CD14-positive monocyte (primary cell): ENCODE measurements at regions of chr10 and their contacts with region 1.

Region 1: GRCh38 chr10:931416-932318 is at the start of gene LARP4B:
- DNase-seq: peak; percentile 98 to 99 (median 99)
- H3K4me3 ChIP-seq: peak within 1 kb of the TSS; percentile 87 to 99 (median 90)
- H3K4me3 Mint-ChIP-seq: peak within 1 kb of the TSS; percentile 91 to 98
- H3K27ac ChIP-seq: peak within 1 kb of the TSS; percentile 91 to 97
- H3K27ac Mint-ChIP-seq: peak within 1 kb of the TSS; percentile 95 to 97 (median 96)
- H3K4me1 ChIP-seq: peaks cover 23% of the 10 kb centered on the region in 2 donors
- H3K4me1 Mint-ChIP-seq: peaks cover 32% of the 10 kb centered on the region
- H3K27me3 ChIP-seq: no peaks in the 10 kb centered on the region
- H3K27me3 Mint-ChIP-seq: peaks cover 0 to 3% (median 2%) of the 10 kb centered on the region in 3 donors
- CTCF ChIP-seq: no peak
- polyA plus RNA-seq, gene LARP4B: 17.2 to 52.3 (median 33.0) TPM

Region 2: GRCh38 chr10:665579-666091 is 266.0 kb before region 1 on chr10:
- intact Hi-C with region 1: no loop called
- DNase-seq: no peak
- H3K4me3 ChIP-seq: no peak overlapping the region
- H3K4me3 Mint-ChIP-seq: peak overlapping the region in 1 of 2 donors; percentile 1
- H3K27ac ChIP-seq: no peak overlapping the region
- H3K27ac Mint-ChIP-seq: no peak overlapping the region
- H3K4me1 ChIP-seq: no peaks in the 10 kb centered on the region
- H3K4me1 Mint-ChIP-seq: no peaks in the 10 kb centered on the region
- H3K27me3 ChIP-seq: no peaks in the 10 kb centered on the region
- H3K27me3 Mint-ChIP-seq: peaks cover 6 to 10% (median 9%) of the 10 kb centered on the region in 3 donors
- CTCF ChIP-seq: no peak

Region 3: DNA sequence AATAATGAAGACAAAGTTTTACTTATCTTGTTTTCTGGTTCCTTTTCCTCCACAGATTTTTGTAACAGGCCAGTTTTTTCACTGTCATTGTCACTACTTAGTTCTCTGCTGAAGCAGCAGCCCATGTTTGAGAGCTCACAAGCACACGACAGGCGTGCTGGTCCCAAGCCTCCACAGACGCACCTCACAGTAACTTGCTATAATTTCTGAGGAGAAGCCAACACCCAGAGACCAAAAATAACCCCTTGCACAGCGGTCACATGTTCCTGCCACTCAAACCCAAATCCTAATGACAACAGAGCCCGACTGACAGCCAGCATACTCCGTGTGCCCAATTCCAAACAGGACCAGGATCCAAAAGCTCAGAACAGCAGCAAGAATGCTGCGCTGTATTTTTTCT is 58.6 kb before region 1 on chr10:
- intact Hi-C with region 1: no loop called
- DNase-seq: no peak
- H3K4me3 ChIP-seq: no peak overlapping the region
- H3K4me3 Mint-ChIP-seq: no peak overlapping the region
- H3K27ac ChIP-seq: no peak overlapping the region
- H3K27ac Mint-ChIP-seq: peak overlapping the region in 1 of 7 donors; percentile 4
- H3K4me1 ChIP-seq: no peaks in the 10 kb centered on the region
- H3K4me1 Mint-ChIP-seq: peaks cover 8% of the 10 kb centered on the region
- H3K27me3 ChIP-seq: no peaks in the 10 kb centered on the region
- H3K27me3 Mint-ChIP-seq: peaks cover 0 to 2% (median 0%) of the 10 kb centered on the region in 3 donors
- CTCF ChIP-seq: no peak

Region 4: GRCh38 chr10:944034-944831 is 12.6 kb after region 1 on chr10:
- intact Hi-C with region 1: no loop called
- DNase-seq: peak; percentile 97 to 98 (median 98)
- H3K4me3 ChIP-seq: peak overlapping the region in 1 of 3 experiments; percentile 57
- H3K4me3 Mint-ChIP-seq: peak overlapping the region; percentile 63 to 76
- H3K27ac ChIP-seq: peak overlapping the region; percentile 85 to 93
- H3K27ac Mint-ChIP-seq: peak overlapping the region; percentile 91 to 97 (median 95)
- H3K4me1 ChIP-seq: peaks cover 23 to 24% of the 10 kb centered on the region in 2 donors
- H3K4me1 Mint-ChIP-seq: peaks cover 31% of the 10 kb centered on the region
- H3K27me3 ChIP-seq: no peaks in the 10 kb centered on the region
- H3K27me3 Mint-ChIP-seq: peaks cover 0 to 1% (median 1%) of the 10 kb centered on the region in 3 donors
- CTCF ChIP-seq: no peak

Region 5: DNA sequence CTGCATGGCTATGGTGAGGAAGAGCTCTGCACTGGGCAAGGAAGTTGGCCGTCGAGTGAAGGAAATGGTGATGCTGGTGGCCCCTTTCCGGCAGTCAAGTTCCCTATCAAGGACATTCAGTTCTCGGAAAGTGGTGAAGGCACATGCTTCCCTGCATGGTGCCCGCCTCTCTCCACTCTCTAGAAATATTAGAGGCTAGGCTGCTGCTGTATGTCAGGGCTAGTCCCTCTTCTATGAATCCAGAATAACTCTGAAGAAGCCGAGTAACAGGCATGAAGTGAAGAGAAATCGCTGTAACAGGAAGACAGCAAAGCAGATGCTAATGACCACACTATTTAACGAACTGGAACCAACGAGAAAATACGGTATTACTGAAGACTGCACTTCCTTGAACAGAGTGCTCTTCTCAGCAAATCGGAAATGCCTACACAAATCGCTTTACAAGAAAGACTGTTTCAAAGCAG is 111.9 kb after region 1 on chr10:
- intact Hi-C with region 1: loop called in 1 of 2 experiments (anchors 5 kb)
- DNase-seq: peak; percentile 61 to 65 (median 63)
- H3K4me3 ChIP-seq: peak overlapping the region; percentile 30 to 94 (median 78)
- H3K4me3 Mint-ChIP-seq: peak overlapping the region; percentile 86 to 97
- H3K27ac ChIP-seq: peak overlapping the region; percentile 71 to 86
- H3K27ac Mint-ChIP-seq: peak overlapping the region; percentile 94 to 99 (median 99)
- H3K4me1 ChIP-seq: peaks cover 37 to 56% of the 10 kb centered on the region in 2 donors
- H3K4me1 Mint-ChIP-seq: peaks cover 41% of the 10 kb centered on the region
- H3K27me3 ChIP-seq: no peaks in the 10 kb centered on the region
- H3K27me3 Mint-ChIP-seq: no peaks in the 10 kb centered on the region
- CTCF ChIP-seq: no peak

Region 6: DNA sequence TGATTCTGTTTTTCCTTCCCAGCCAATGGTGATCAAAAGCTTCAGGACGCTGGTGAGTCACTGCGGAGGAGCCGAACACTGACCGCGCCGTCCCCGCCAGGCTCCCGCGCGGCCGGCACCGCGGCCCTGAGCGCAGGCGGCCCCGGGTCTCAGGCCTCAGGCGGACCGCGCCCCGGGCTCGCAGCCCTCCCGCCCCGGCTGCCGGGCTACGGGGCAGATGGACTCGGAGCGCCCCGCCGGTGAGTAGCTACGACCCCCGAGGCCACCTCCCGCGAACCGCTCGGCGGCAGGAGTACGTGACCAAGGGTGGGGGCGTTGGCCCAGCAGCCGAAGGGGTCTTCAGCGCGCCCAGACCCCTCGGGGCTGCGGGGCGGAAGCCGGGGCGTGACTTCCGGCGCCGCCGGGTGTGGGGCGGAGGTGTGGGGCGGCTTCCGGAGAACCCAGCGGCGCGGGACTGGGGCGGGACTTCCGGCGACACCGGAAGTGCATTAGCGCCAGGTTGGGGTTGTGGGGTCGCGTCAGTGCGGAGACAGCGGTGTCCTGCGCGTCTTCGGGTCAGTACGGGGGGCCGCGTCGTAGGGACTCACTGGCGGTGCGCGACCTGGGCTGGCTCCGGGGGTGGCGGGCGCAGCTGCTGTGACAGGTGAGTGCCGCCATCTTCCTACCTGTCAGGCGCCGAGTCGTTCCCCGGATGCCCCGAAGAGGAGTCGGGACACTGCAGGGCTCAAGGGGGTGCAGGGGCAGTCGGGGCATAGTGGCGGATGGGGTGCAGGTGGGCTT is 124.8 kb after region 1 on chr10 and contains the start of gene WDR37:
- intact Hi-C with region 1: loop called in 1 of 2 experiments (anchors 5 kb)
- DNase-seq: peak; percentile 78 to 84 (median 80)
- H3K4me3 ChIP-seq: peak within 1 kb of the TSS; percentile 95 to 98 (median 96)
- H3K4me3 Mint-ChIP-seq: peak within 1 kb of the TSS; percentile 92 to 95
- H3K27ac ChIP-seq: peak within 1 kb of the TSS; percentile 96 to 98
- H3K27ac Mint-ChIP-seq: peak within 1 kb of the TSS; percentile 98 to 99 (median 99)
- H3K4me1 ChIP-seq: peaks cover 25 to 38% of the 10 kb centered on the region in 2 donors
- H3K4me1 Mint-ChIP-seq: peaks cover 65% of the 10 kb centered on the region
- H3K27me3 ChIP-seq: no peaks in the 10 kb centered on the region
- H3K27me3 Mint-ChIP-seq: peaks cover 0 to 1% (median 0%) of the 10 kb centered on the region in 3 donors
- CTCF ChIP-seq: no peak
- polyA plus RNA-seq, gene WDR37: 7.1 to 33.6 (median 8.6) TPM